Calu3 (cell line): ENCODE measurements at regions of chr11 and their contacts with region 1.

Region 1: GRCh38 chr11:64878494-64879243 is at the start of gene EHD1:
- DNase-seq: peak; percentile 99
- H3K4me3 Mint-ChIP-seq: peak within 1 kb of the TSS; percentile 98
- H3K27ac Mint-ChIP-seq: peak within 1 kb of the TSS; percentile 93
- H3K4me1 Mint-ChIP-seq: peaks cover 28% of the 10 kb centered on the region
- H3K27me3 Mint-ChIP-seq: no peaks in the 10 kb centered on the region
- CTCF ChIP-seq: peak; percentile 7
- total RNA-seq, gene EHD1: 92.8 and 101 TPM in 2 replicates

Region 2: GRCh38 chr11:64814712-64815187 is 63.9 kb before region 1 on chr11:
- CTCF ChIA-PET with region 1: no interaction called
- intact Hi-C with region 1: no loop called
- DNase-seq: no peak
- H3K4me3 Mint-ChIP-seq: no peak overlapping the region
- H3K27ac Mint-ChIP-seq: no peak overlapping the region
- H3K4me1 Mint-ChIP-seq: peaks cover 10% of the 10 kb centered on the region
- H3K27me3 Mint-ChIP-seq: no peaks in the 10 kb centered on the region
- CTCF ChIP-seq: no peak

Region 3: GRCh38 chr11:64834723-64835620 is 43.7 kb before region 1 on chr11:
- CTCF ChIA-PET with region 1: no interaction called
- intact Hi-C with region 1: no loop called
- DNase-seq: peak; percentile 89
- H3K4me3 Mint-ChIP-seq: peak overlapping the region; percentile 31
- H3K27ac Mint-ChIP-seq: no peak overlapping the region
- H3K4me1 Mint-ChIP-seq: peaks cover 9% of the 10 kb centered on the region
- H3K27me3 Mint-ChIP-seq: no peaks in the 10 kb centered on the region
- CTCF ChIP-seq: no peak

Region 4: GRCh38 chr11:64894070-64894796 is 15.6 kb after region 1 on chr11:
- CTCF ChIA-PET with region 1: interaction called, 11 read pairs
- intact Hi-C with region 1: no loop called
- DNase-seq: peak; percentile 93
- H3K4me3 Mint-ChIP-seq: peak overlapping the region; percentile 7
- H3K27ac Mint-ChIP-seq: no peak overlapping the region
- H3K4me1 Mint-ChIP-seq: peaks cover 32% of the 10 kb centered on the region
- H3K27me3 Mint-ChIP-seq: no peaks in the 10 kb centered on the region
- CTCF ChIP-seq: peak; percentile 87

Region 5: GRCh38 chr11:65003282-65003681 is 124.6 kb after region 1 on chr11:
- CTCF ChIA-PET with region 1: no interaction called
- intact Hi-C with region 1: no loop called
- DNase-seq: no peak
- H3K4me3 Mint-ChIP-seq: no peak overlapping the region
- H3K27ac Mint-ChIP-seq: no peak overlapping the region
- H3K4me1 Mint-ChIP-seq: peaks cover 10% of the 10 kb centered on the region
- H3K27me3 Mint-ChIP-seq: no peaks in the 10 kb centered on the region
- CTCF ChIP-seq: no peak